Activated naive CD4-positive, alpha-beta T cell treated with anti-CD3 and anti-CD28 coated beads, Interleukin-2, amount 10 ng/mL, durations not matched to agents 7 days and 5 days (primary cell): ENCODE measurements at regions of chr11 and their contacts with region 1.

Region 1: DNA sequence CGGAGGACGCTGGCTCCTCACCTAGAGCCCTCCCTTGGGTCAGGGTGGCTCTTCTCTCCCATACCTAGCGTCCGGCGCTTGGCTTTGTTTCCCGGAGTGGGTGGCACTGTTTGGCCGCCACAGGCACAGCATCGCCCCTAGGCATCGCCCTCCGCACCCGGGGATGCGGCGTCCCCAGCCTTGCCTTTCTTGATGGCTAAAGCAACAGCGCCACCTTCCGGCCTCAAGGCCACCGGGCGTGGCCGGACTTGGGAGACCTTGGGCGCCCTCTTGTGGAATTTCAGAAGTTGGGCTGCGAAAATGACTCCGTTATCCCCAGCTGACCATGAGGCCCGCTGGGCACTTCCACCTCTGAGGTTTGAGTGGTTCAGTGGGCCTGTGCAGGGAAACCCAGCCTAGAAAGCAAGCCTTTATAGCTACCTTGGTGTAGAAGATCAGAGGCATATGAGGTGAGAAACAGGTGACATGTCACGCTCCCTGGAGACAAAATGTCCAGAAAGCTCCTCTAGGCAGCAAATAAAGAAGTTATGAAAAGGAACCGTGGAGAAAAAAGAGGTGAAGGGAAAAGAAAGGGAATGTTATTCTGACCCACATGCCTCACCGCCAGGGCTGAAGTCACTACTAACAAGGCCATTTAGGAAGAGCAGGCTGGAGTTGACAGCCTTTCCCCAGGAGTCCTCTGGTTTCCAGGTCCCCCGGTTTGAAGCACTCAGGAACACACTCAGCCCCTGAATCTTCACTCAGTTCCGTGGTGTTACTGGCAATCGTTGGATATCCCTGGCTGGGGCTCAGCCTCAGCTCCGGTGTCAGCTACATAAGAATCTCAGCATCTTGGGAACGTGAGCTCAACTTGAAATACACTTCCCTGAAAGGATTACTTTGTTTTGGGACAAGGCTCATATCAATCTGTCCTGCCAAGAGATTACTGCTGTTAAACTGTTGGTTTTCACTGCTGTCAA is 54.1 kb downstream of the SNX19 start:
- DNase-seq: peak; percentile 92
- H3K4me3 Mint-ChIP-seq: no peak overlapping the region
- H3K27ac Mint-ChIP-seq: peak overlapping the region; percentile 38
- H3K4me1 Mint-ChIP-seq: no peaks in the 10 kb centered on the region
- H3K27me3 Mint-ChIP-seq: no peaks in the 10 kb centered on the region

Region 2: GRCh38 chr11:130434521-130435223 is 427.5 kb before region 1 on chr11:
- CTCF ChIA-PET with region 1: interaction called, 270 read pairs
- DNase-seq: peak; percentile 79
- H3K4me3 Mint-ChIP-seq: no peak overlapping the region
- H3K27ac Mint-ChIP-seq: no peak overlapping the region
- H3K4me1 Mint-ChIP-seq: peaks cover 24% of the 10 kb centered on the region
- H3K27me3 Mint-ChIP-seq: peaks cover 58% of the 10 kb centered on the region

Region 3: DNA sequence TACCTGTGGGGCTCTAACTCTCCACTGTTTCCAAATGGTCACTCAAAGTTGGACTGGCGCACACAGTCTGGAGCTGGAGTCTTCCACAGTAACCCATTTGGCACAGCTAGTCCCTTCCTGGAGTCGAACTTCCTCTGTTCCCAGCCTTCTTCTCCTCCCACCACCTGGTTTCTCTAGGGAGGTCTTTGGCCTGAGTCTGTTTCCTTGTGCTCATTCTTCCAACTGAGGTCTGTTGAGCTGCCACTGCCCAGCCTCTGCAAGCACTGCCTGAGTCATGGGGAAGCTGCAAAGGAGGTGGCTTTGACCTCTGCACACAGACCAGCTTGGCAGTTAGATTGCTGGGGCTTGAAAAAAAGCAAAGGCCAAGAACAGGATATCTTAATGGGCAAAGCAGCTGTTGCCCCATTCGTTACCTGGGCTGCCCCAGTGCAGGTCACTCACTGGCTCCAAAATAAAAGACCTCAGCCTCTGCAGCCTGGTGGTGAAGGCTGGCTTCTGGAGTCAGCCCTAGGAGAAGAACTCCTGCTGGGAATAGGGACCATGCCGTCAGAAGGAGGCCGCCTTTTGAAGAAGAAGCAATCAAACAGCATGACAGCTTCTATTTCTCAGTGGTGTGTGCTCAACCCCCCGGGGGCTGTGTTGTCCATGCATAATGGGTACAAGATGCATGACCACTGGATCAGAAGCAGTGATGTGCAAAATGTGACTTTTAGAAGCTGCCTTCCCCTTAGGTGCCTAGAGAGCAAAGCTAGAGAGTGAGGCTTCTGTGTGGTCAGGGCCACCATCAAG is 410.8 kb before region 1 on chr11:
- CTCF ChIA-PET with region 1: interaction called, 10 read pairs
- DNase-seq: no peak
- H3K4me3 Mint-ChIP-seq: no peak overlapping the region
- H3K27ac Mint-ChIP-seq: no peak overlapping the region
- H3K4me1 Mint-ChIP-seq: peaks cover 9% of the 10 kb centered on the region
- H3K27me3 Mint-ChIP-seq: peaks cover 88% of the 10 kb centered on the region

Region 4: GRCh38 chr11:130872981-130873380 is 10.8 kb after region 1 on chr11:
- CTCF ChIA-PET with region 1: interaction called, 24 read pairs
- DNase-seq: no peak
- H3K4me3 Mint-ChIP-seq: no peak overlapping the region
- H3K27ac Mint-ChIP-seq: no peak overlapping the region
- H3K4me1 Mint-ChIP-seq: no peaks in the 10 kb centered on the region
- H3K27me3 Mint-ChIP-seq: no peaks in the 10 kb centered on the region